ENCODE measurements at regions of chr13 and their contacts with region 1.

Region 1: DNA sequence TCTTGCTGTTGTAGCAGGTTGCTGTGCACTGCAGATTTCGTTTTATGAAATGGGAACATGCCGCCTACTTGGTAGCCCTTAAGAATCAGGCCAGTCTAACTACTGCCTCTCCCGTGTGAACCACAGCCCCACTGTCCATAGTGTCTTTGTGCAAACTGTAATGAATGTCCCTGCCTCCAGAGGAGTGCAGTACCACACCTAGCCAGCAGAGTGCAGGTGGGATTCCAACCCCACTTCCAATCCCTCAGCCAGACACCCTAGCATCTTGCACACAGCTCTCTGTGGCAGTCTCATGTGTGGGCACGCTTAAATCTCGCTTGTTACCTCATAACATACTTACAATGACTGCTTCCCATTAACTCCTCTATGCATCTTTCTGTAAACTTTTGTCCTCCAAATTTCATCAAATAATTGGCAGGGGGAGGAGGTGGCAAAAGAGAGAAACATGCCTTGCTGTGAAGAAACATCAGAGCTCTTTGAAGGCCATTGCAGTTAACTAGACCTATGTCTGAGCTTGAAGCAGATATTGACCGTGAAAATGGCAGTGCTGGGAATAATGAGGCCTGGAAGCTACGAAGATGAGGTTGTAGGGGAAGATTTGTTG is 47.2 kb downstream of the ZAR1L start:
- DNase-seq: no peak
- H3K4me3 ChIP-seq: no peak overlapping the region
- H3K27me3 ChIP-seq: no peaks in the 10 kb centered on the region
- CTCF ChIP-seq: peak; percentile 52

Region 2: DNA sequence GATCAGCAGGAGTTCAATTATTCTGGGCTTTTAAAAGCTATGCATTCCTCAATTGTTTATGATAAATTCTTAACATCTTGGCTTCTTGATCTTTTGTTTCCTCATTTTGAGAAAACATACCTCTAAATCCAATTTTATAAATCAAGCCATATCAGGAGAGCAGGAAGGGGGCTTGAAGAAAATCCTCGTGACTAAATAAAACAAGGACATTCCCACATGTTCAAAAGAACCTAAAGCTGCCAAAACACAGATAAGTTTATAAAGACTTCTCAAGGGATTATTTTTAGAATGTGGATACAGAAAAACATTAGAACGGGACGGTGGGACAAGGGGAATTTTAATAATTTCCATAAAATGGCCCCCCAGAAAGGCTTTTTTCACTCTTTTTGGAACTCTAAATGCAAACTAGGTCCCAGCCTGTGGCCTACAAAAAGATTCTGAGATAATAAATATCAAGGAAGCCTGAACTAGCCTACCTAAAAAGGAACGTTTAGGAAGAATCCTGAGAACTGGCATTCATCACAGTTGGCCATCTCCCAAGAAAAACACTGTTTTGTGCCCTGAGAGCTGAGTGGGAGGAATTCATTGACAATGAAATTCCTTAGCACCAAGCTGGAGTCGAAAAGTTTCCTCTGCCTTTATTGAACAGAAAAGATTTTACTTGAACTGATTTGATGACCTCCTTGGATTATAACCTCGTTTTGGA is 17.1 kb after region 1 on chr13:
- CTCF ChIA-PET with region 1: interaction called, 13 read pairs
- POLR2A ChIA-PET with region 1: no interaction called
- DNase-seq: peak; percentile 39
- H3K4me3 ChIP-seq: no peak overlapping the region
- H3K27me3 ChIP-seq: no peaks in the 10 kb centered on the region
- CTCF ChIP-seq: no peak